Activated CD4-positive, alpha-beta memory T cell treated with anti-CD3 and anti-CD28 coated beads for 36 hours (primary cell): ENCODE measurements at regions of chr20 and their contacts with region 1.

Region 1: DNA sequence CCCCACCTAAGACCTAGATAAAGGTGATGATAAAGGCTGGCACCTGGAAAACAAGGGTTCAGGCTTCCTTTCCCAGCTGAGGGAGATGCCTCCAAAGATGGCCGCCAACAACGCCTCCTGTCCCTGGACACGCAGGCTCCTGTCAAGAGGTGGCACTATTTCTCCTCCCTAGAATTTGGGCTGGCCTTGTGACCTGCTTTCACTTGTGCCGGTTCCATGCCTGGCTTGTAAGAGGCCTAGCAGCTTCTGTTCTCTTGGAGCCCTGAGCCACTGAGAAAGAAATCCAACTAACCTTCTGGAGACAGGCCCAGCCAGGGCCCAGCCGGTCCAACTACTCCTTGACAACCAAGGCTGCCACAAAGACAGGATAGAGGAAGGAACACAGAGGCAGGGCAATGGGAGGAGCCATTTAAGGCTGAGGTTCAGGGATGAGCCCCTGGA is 60.2 kb upstream of the RALY start:
- DNase-seq: peak; percentile 80
- H3K4me3 Mint-ChIP-seq: no peak overlapping the region
- H3K27ac Mint-ChIP-seq: no peak overlapping the region
- H3K4me1 Mint-ChIP-seq: peaks cover 2% of the 10 kb centered on the region
- H3K27me3 Mint-ChIP-seq: no peaks in the 10 kb centered on the region

Region 2: GRCh38 chr20:33709398-33709797 is 224.1 kb before region 1 on chr20:
- CTCF ChIA-PET with region 1: no interaction called
- POLR2A ChIA-PET with region 1: no interaction called
- intact Hi-C with region 1: no loop called
- DNase-seq: no peak
- H3K4me3 Mint-ChIP-seq: no peak overlapping the region
- H3K27ac Mint-ChIP-seq: peak overlapping the region; percentile 75
- H3K4me1 Mint-ChIP-seq: peaks cover 11% of the 10 kb centered on the region
- H3K27me3 Mint-ChIP-seq: no peaks in the 10 kb centered on the region

Region 3: GRCh38 chr20:34062570-34063482 is 129.3 kb after region 1 on chr20:
- CTCF ChIA-PET with region 1: interaction called, 30 read pairs
- POLR2A ChIA-PET with region 1: no interaction called
- intact Hi-C with region 1: no loop called
- DNase-seq: peak; percentile 30
- H3K4me3 Mint-ChIP-seq: no peak overlapping the region
- H3K27ac Mint-ChIP-seq: peak overlapping the region; percentile 75
- H3K4me1 Mint-ChIP-seq: peaks cover 56% of the 10 kb centered on the region
- H3K27me3 Mint-ChIP-seq: no peaks in the 10 kb centered on the region